Lower lobe of right lung (tissue), 2 donors: ENCODE measurements at regions of chr6 and their contacts with region 1.

Region 1: DNA sequence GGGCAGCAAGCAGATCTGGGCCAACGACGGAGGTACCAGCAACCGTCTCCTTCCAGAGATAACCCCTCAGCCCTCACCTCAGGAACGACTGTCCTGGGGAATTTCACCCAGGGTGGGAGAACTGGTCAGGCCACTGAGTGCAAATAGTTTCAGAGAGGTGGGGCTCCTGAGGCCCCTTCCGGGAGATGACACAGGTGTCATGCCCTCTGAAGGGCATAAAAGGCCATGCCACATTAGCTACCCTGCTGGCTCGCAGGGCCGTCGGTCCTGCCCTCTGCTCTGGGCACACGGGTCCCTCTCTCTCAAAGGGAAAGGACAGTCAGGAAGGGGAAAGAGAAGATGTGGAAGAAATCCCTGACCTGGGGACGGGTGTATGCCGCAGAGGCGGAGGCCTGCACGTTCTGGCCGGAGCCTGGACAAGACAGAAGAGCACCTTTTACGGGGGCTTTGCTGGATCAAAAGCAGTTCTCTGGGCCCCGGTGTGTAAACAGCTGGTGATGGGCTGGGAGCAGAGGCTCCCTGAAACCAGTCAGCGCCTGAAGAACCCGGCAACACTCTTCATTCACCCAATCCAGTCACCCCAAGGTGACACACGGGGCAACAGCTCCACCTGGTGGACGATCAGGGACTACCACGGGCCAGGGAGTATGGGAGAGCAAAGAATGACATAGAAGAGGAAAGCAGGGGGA is 6.4 kb upstream of the TAF8 start:
- DNase-seq: peak; percentile 85
- ATAC-seq: peak; percentile 75 to 77
- H3K4me3 ChIP-seq: peak overlapping the region; percentile 30
- H3K27ac ChIP-seq: peak overlapping the region; percentile 90
- H3K4me1 ChIP-seq: peaks cover 89% of the 10 kb centered on the region
- H3K27me3 ChIP-seq: no peaks in the 10 kb centered on the region
- CTCF ChIP-seq: peak; percentile 96

Region 2: DNA sequence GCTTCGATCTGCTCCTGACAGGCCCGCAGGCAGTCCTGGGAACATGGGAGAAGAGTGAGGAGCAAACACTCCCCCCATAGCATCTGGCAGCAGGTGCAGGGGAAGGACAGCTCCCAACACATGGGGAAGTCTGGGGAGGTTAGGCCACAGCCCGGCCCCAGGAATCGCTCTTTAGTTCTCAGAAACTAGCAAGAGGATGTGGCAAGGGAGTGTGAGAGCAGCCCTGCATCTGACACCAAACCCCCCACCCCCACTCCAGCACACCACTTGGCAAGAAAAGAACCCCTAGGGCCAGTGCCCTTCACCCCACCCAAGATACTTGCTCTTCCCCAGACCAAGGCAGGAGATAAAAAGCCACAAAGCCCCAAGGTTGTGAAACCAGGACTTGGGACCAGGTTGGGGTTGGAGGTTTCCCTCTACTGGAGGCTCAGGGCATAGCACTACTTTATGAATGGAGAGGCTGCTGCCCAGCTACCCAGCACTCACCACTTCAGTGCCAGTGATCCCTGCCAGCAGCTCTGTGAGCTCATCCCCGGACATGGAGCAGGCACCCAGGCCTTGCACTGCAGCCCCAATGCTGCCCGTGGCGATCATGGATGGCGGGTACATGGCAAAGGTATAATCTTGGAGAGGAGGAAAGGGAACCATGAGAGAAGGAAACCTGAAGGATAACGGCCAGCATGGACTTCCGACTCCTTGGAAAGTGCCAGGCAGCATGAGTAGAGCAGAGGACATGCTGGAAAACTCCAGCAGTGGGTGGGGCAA is 107.7 kb before region 1 on chr6:
- intact Hi-C with region 1: loop called (anchors 10 kb)
- DNase-seq: peak; percentile 81
- ATAC-seq: peak; percentile 75 to 83
- H3K4me3 ChIP-seq: peak overlapping the region; percentile 12
- H3K27ac ChIP-seq: peak overlapping the region; percentile 84
- H3K4me1 ChIP-seq: peaks cover 64% of the 10 kb centered on the region
- H3K27me3 ChIP-seq: no peaks in the 10 kb centered on the region
- CTCF ChIP-seq: peak; percentile 81

Region 3: GRCh38 chr6:41984623-41985022 is 59.3 kb before region 1 on chr6:
- intact Hi-C with region 1: no loop called
- DNase-seq: no peak
- ATAC-seq: peak; percentile 17 to 75
- H3K4me3 ChIP-seq: no peak overlapping the region
- H3K27ac ChIP-seq: no peak overlapping the region
- H3K4me1 ChIP-seq: peaks cover 8% of the 10 kb centered on the region
- H3K27me3 ChIP-seq: no peaks in the 10 kb centered on the region
- CTCF ChIP-seq: no peak

Region 4: GRCh38 chr6:42326248-42326647 is 282.3 kb after region 1 on chr6:
- intact Hi-C with region 1: no loop called
- DNase-seq: no peak
- ATAC-seq: no peak
- H3K4me3 ChIP-seq: no peak overlapping the region
- H3K27ac ChIP-seq: no peak overlapping the region
- H3K4me1 ChIP-seq: no peaks in the 10 kb centered on the region
- H3K27me3 ChIP-seq: no peaks in the 10 kb centered on the region
- CTCF ChIP-seq: no peak